CD4-positive, alpha-beta memory T cell (primary cell): ENCODE measurements at regions of chr6 and their contacts with region 1.

Region 1: DNA sequence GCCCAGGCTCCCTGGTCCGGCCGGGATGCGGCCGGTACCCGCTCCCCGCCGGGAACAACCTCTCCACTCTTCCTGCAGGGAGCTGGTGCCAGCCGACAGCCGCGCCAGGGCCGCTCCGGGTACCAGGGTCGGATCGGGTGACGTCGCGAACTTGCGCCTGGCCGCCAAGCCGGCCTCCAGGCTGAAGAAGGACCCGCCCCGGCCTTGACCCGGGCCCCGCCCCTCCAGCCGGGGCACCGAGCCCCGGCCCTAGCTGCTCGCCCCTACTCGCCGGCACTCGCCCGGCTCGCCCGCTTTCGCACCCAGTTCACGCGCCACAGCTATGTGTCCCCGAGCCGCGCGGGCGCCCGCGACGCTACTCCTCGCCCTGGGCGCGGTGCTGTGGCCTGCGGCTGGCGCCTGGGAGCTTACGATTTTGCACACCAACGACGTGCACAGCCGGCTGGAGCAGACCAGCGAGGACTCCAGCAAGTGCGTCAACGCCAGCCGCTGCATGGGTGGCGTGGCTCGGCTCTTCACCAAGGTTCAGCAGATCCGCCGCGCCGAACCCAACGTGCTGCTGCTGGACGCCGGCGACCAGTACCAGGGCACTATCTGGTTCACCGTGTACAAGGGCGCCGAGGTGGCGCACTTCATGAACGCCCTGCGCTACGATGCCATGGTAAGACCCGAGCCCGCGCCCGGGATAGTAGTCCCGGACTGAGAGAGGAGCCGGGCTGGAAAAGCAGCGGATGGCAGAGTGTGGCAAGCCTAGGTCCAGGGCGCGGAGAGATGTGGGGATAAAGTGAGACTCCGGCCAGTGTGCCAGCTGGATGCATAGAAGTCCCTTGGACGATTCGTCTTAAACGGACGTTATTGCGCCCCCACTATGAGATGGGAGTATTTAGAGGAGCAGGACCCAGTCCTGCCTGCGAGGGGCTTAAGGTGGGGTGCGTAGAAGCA is at the start of gene NT5E:
- DNase-seq: peak in 4 of 5 donors; percentile 16 to 45 (median 27)
- H3K4me3 ChIP-seq: no peak within 1 kb of the TSS
- H3K4me3 Mint-ChIP-seq: peak within 1 kb of the TSS; percentile 82 to 95 (median 90)
- H3K27ac ChIP-seq: no peak within 1 kb of the TSS
- H3K27ac Mint-ChIP-seq: peak within 1 kb of the TSS in 5 of 7 donors; percentile 38 to 87 (median 72)
- H3K4me1 ChIP-seq: peaks cover 7% of the 10 kb centered on the region
- H3K4me1 Mint-ChIP-seq: peaks cover 9 to 36% (median 16%) of the 10 kb centered on the region in 4 donors
- H3K27me3 ChIP-seq: peaks cover 8% of the 10 kb centered on the region
- H3K27me3 Mint-ChIP-seq: peaks cover 37 to 46% of the 10 kb centered on the region in 2 donors
- total RNA-seq, gene NT5E: 3.3 TPM

Region 2: DNA sequence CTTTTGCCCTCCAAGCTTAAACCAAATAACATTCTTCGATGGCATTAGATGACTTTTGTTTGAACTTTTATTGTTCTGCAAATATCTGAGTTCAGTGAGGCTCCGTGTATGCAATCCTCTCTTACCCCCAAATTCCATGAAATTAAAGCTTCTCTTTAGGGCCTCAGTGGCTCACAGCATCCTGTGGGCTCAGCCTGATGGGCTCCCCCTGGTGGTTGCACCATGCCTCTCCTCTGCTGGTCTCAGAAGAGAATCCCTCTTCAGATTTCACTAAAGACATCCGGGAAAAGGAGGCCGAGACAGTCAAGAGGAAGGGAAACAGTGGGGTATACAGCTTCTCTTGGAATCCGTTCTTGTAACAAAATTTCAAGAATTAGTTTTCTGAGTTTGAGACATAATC is 331.9 kb before region 1 on chr6:
- CTCF ChIA-PET with region 1: no interaction called
- POLR2A ChIA-PET with region 1: no interaction called
- intact Hi-C with region 1: no loop called
- DNase-seq: no peak
- H3K4me3 ChIP-seq: no peak overlapping the region
- H3K4me3 Mint-ChIP-seq: no peak overlapping the region
- H3K27ac ChIP-seq: no peak overlapping the region
- H3K27ac Mint-ChIP-seq: no peak overlapping the region
- H3K4me1 ChIP-seq: no peaks in the 10 kb centered on the region
- H3K4me1 Mint-ChIP-seq: no peaks in the 10 kb centered on the region
- H3K27me3 ChIP-seq: no peaks in the 10 kb centered on the region
- H3K27me3 Mint-ChIP-seq: no peaks in the 10 kb centered on the region

Region 3: GRCh38 chr6:85404502-85405174 is 45.5 kb before region 1 on chr6:
- CTCF ChIA-PET with region 1: no interaction called
- POLR2A ChIA-PET with region 1: interaction called, 11 read pairs
- intact Hi-C with region 1: no loop called
- DNase-seq: no peak
- H3K4me3 ChIP-seq: no peak overlapping the region
- H3K4me3 Mint-ChIP-seq: peak overlapping the region in 1 of 8 donors; percentile 23
- H3K27ac ChIP-seq: no peak overlapping the region
- H3K27ac Mint-ChIP-seq: peak overlapping the region in 5 of 7 donors; percentile 14 to 62 (median 32)
- H3K4me1 ChIP-seq: no peaks in the 10 kb centered on the region
- H3K4me1 Mint-ChIP-seq: peaks cover 0 to 29% (median 6%) of the 10 kb centered on the region in 4 donors
- H3K27me3 ChIP-seq: no peaks in the 10 kb centered on the region
- H3K27me3 Mint-ChIP-seq: peaks cover 0 to 1% of the 10 kb centered on the region in 2 donors

Region 4: DNA sequence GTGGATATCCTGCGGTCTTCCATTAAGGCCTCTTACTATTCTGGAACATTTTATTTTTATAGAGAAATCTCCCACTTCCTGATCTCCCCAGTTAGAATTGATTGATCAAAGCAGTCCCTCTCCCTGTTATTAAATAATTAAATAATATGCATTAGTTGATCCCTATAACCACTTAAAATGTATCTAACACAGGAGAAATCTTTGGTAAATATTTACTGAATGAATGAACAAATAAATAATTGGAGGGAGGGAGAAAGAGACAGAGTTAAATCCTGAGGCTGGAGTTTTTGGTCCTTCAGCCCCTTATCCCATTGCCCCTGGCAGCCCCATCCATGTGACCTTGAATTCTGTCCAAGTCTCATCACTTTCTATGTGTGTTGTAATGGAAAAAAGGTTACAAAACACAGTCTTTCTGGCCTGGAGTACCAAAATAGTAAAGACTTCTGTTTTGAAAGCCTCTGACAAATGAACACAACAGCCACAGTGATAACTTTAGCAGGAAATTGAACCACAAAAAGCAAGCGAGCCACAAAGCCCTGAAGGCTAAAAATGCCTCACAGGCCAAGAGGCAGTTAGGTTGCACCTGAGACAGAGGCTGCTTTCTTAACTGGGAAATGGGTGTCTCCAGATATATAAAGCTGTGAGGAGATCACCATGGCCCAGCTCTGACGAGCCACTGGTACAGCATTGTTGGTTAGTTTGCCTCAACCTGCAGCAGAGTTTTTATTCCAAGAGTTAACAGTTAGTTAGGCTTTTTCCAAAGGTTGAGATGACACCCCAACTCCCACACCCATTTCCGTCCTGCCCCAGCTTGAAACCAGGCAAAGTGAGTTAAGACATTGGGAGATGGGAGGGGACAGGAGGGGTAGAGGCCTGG is 11.1 kb after region 1 on chr6:
- CTCF ChIA-PET with region 1: interaction called, 8 read pairs
- POLR2A ChIA-PET with region 1: interaction called, 12 read pairs
- intact Hi-C with region 1: no loop called
- DNase-seq: peak in 4 of 5 donors; percentile 23 to 48 (median 37)
- H3K4me3 ChIP-seq: no peak overlapping the region
- H3K4me3 Mint-ChIP-seq: peak overlapping the region in 5 of 8 donors; percentile 7 to 40 (median 30)
- H3K27ac ChIP-seq: no peak overlapping the region
- H3K27ac Mint-ChIP-seq: peak overlapping the region; percentile 13 to 77 (median 48)
- H3K4me1 ChIP-seq: peaks cover 28% of the 10 kb centered on the region
- H3K4me1 Mint-ChIP-seq: peaks cover 6 to 56% (median 36%) of the 10 kb centered on the region in 4 donors
- H3K27me3 ChIP-seq: no peaks in the 10 kb centered on the region
- H3K27me3 Mint-ChIP-seq: peaks cover 6 to 15% of the 10 kb centered on the region in 2 donors